PC-9 (cell line): ENCODE measurements at regions of chr2 and their contacts with region 1.

Region 1: DNA sequence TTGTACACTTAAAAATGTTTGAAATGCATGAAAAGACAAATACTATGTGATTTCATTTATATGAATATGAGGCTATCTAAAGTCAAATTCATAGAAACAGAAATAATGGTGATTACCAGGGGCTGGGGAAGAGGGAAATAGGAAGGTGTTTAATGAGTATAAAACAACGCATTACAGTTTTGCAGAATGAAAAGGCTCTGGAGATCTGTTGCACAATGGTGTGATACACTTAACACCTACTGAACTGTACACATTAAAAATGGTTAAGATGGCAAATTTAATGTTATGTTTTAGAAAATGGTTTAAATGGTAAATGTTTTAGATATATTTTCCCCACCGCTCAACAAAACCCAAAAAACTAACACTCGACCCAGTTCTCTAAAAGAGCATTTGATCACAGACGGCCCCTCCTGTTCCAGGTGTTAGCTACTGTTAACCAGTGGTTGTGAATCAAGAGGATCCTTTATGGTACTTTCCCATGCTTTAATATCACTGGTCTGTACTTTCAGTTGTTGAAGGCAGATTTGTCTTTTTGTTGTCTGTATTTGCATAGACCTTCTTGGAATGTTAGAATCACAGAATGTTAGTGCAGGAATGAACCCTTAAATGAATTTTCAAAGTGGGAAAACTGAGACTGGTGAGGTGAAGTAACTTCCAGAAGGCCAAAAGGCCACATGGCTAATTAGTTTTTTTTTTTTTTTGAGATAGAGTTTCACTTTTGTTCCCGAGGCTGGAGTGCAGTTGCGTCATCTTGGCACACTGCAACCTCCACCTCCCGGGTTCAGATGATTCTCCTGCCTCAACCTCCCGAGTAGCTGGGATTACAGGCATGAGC is 10.2 kb downstream of the RAB10 start:
- DNase-seq: no peak
- H3K4me3 ChIP-seq: no peak overlapping the region
- H3K27ac ChIP-seq: peak overlapping the region; percentile 2; the same call in 1 of the 2 replicates
- H3K4me1 ChIP-seq: peaks cover 15% of the 10 kb centered on the region; the same call in 1 of the 2 replicates
- H3K27me3 ChIP-seq: no peaks in the 10 kb centered on the region
- CTCF ChIP-seq: no peak

Region 2: GRCh38 chr2:26099933-26100332 is 55.9 kb after region 1 on chr2:
- CTCF ChIA-PET with region 1: interaction called, 14 read pairs
- POLR2A ChIA-PET with region 1: no interaction called
- intact Hi-C with region 1: no loop called
- DNase-seq: no peak
- H3K4me3 ChIP-seq: no peak overlapping the region
- H3K27ac ChIP-seq: no peak overlapping the region
- H3K4me1 ChIP-seq: 0 out of 2 replicates have a peak, but pooled peaks cover 9% of the 10 kb centered on the region
- H3K27me3 ChIP-seq: no peaks in the 10 kb centered on the region
- CTCF ChIP-seq: no peak

Region 3: DNA sequence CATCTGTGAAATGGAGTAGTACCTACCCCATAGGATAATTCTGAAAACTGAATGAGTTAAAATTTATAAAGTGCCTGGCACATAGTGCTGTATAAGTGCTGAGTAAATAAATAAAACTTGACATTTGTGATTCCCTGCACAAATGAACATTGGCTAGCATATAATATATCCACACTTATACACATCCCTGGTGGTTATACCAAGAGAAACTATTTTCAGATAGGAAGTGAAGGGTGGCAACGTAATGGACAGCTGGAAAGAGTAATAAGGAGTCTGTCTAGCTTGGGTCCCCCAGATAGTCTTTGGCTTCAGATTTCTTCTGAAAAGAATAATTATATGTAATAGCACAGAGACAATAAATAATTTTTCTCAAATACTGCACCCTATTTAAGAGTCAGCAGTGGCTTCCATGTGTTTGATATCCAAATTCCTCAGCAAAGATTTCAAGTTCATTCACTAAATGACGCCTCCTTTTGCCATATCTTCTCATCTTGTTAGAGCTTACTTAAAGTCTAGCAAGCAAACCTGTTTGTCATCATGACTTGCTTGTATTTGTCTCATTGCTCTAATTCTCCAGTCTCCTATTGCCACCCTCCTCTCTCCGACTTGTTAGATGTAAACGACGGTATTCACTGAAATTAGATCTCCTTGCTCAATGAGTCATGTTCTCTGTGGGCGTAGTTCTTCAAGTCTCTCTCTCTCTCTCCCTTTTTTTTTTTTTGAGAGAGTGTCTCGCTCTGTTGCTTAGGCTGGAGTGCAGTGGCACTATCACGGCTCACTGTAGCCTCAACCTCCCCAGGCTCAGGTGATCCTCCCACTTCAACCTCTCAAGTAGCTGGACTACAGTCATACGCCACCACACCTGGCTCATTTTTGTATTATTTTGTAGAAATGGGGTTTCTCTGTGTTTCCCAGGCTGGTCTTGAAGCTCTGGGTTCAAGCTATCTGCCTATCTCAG is 311.2 kb after region 1 on chr2:
- CTCF ChIA-PET with region 1: no interaction called
- POLR2A ChIA-PET with region 1: interaction called, 11 read pairs
- intact Hi-C with region 1: no loop called
- DNase-seq: peak; percentile 48 to 100
- H3K4me3 ChIP-seq: peak overlapping the region; percentile 46
- H3K27ac ChIP-seq: peak overlapping the region; percentile 99
- H3K4me1 ChIP-seq: peaks cover 63% of the 10 kb centered on the region
- H3K27me3 ChIP-seq: no peaks in the 10 kb centered on the region
- CTCF ChIP-seq: peak; percentile 17; the same call in 1 of the 2 replicates